Natural killer cell (primary cell): ENCODE measurements at regions of chr3 and their contacts with region 1.

Region 1: GRCh38 chr3:44861412-44862220 is at the start of gene TMEM42:
- DNase-seq: peak; percentile 92 to 95
- ATAC-seq: peak; percentile 93 to 95 (median 94)
- H3K4me3 ChIP-seq: peak within 1 kb of the TSS; percentile 81
- H3K4me3 Mint-ChIP-seq: peak within 1 kb of the TSS; percentile 94
- H3K27ac ChIP-seq: peak within 1 kb of the TSS; percentile 95
- H3K27ac Mint-ChIP-seq: peak within 1 kb of the TSS; percentile 94 to 96
- H3K4me1 ChIP-seq: peaks cover 35% of the 10 kb centered on the region
- H3K4me1 Mint-ChIP-seq: peaks cover 33 to 47% of the 10 kb centered on the region in 2 donors
- H3K27me3 ChIP-seq: no peaks in the 10 kb centered on the region
- H3K27me3 Mint-ChIP-seq: no peaks in the 10 kb centered on the region
- CTCF ChIP-seq: no peak
- total RNA-seq, gene TMEM42: 9.9 to 15.9 (median 11.3) TPM

Region 2: DNA sequence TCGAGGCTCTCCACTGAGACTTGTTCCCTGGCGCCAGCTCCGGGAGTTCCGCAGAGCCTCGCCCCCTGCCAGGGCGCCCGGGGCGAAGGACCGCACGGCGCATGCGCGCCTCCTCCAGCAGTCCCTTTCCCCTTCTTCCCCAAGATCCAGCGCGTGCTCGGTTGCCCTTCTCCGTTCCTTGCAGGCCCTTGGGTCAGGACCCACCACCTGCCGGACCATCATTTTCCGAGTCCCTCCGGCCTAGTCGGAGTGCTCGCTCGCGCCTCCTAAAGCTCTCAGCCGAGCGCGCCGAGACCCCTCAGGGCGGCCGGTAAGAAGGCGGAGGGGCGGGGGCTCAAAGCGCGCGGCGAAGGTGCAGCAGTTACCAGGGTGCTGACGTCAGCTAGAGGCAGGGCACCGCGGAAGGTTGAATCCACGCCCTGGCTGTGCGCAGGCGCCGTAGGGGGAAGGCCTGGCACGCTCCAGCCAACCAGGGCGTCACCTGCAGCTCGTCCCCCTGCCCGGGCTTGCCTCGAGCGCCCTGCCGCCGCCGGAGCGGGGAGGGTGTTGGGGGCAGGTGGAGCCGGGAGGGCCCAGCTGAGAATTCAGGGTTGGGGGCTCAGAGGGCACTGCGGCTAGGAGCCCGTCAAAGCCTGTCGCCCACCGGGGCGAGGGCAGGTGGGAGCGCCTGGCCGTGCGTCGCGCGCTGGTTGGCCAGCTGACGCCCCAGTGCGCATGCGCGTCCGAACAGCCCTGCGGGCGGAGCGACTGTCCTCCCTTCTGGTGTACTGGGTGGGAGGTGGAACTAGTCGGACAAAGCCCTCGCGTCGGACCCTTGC is 523.4 kb before region 1 on chr3 and contains the start of gene TCAIM:
- intact Hi-C with region 1: loop called (anchors 5 kb)
- DNase-seq: peak; percentile 98 to 100
- ATAC-seq: peak; percentile 92 to 98 (median 93)
- H3K4me3 ChIP-seq: peak within 1 kb of the TSS; percentile 81
- H3K4me3 Mint-ChIP-seq: peak within 1 kb of the TSS; percentile 96
- H3K27ac ChIP-seq: peak within 1 kb of the TSS; percentile 87
- H3K27ac Mint-ChIP-seq: peak within 1 kb of the TSS; percentile 95 to 96
- H3K4me1 ChIP-seq: peaks cover 13% of the 10 kb centered on the region
- H3K4me1 Mint-ChIP-seq: peaks cover 25 to 32% of the 10 kb centered on the region in 2 donors
- H3K27me3 ChIP-seq: no peaks in the 10 kb centered on the region
- H3K27me3 Mint-ChIP-seq: peaks cover 6 to 9% of the 10 kb centered on the region in 2 donors
- CTCF ChIP-seq: no peak
- total RNA-seq, gene TCAIM: 10.9 to 11.2 (median 11.0) TPM

Region 3: GRCh38 chr3:44510000-44510368 is 351.6 kb before region 1 on chr3:
- intact Hi-C with region 1: loop called (anchors 5 kb)
- DNase-seq: peak in 1 of 2 donors; percentile 56
- ATAC-seq: peak in 2 of 3 donors; percentile 7 to 10
- H3K4me3 ChIP-seq: peak overlapping the region; percentile 94
- H3K4me3 Mint-ChIP-seq: peak overlapping the region; percentile 93
- H3K27ac ChIP-seq: peak overlapping the region; percentile 75
- H3K27ac Mint-ChIP-seq: peak overlapping the region; percentile 87 to 94
- H3K4me1 ChIP-seq: peaks cover 19% of the 10 kb centered on the region
- H3K4me1 Mint-ChIP-seq: peaks cover 35 to 38% of the 10 kb centered on the region in 2 donors
- H3K27me3 ChIP-seq: no peaks in the 10 kb centered on the region
- H3K27me3 Mint-ChIP-seq: no peaks in the 10 kb centered on the region
- CTCF ChIP-seq: no peak

Region 4: GRCh38 chr3:44529927-44530326 is 331.7 kb before region 1 on chr3:
- intact Hi-C with region 1: loop called (anchors 5 kb)
- DNase-seq: peak in 1 of 2 donors; percentile 30
- ATAC-seq: no peak
- H3K4me3 ChIP-seq: no peak overlapping the region
- H3K4me3 Mint-ChIP-seq: no peak overlapping the region
- H3K27ac ChIP-seq: no peak overlapping the region
- H3K27ac Mint-ChIP-seq: no peak overlapping the region
- H3K4me1 ChIP-seq: no peaks in the 10 kb centered on the region
- H3K4me1 Mint-ChIP-seq: peaks cover 0 to 5% of the 10 kb centered on the region in 2 donors
- H3K27me3 ChIP-seq: peaks cover 2% of the 10 kb centered on the region
- H3K27me3 Mint-ChIP-seq: peaks cover 13 to 22% of the 10 kb centered on the region in 2 donors
- CTCF ChIP-seq: no peak

Region 5: DNA sequence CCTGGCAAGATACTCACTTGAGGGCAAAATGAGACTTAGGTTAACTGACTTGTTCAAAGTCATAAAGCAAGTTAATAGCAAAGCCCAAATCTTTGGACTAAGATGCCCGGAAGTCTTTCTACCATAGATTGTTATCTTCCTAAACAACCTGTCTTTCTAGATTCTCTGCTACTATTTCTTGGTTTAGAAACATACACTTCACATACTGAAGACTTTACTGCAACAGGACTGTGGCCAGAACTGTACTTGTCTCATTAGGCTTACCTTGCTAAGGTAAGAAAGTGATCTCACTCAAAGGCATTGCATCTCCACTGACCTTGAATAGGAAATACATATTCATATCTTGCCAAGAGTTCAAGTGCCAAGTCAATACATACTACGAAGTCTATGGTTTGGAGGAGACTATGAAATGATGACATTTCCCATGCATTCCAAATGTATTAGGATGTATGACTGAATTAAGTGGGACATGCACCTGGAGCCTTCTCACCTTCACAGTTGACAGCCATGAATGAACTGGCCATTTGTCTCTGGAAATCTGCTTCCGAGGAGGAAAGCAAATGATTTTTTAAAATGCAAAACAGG is 109.4 kb after region 1 on chr3:
- intact Hi-C with region 1: loop called (anchors 5 kb)
- DNase-seq: no peak
- ATAC-seq: no peak
- H3K4me3 ChIP-seq: no peak overlapping the region
- H3K4me3 Mint-ChIP-seq: peak overlapping the region; percentile 42
- H3K27ac ChIP-seq: no peak overlapping the region
- H3K27ac Mint-ChIP-seq: peak overlapping the region; percentile 76 to 90
- H3K4me1 ChIP-seq: peaks cover 48% of the 10 kb centered on the region
- H3K4me1 Mint-ChIP-seq: peaks cover 75 to 76% of the 10 kb centered on the region in 2 donors
- H3K27me3 ChIP-seq: no peaks in the 10 kb centered on the region
- H3K27me3 Mint-ChIP-seq: no peaks in the 10 kb centered on the region
- CTCF ChIP-seq: no peak